ENCODE measurements at regions of chr1 and their contacts with region 1.

Region 1: GRCh38 chr1:92960395-92961130 is 699 bp downstream of the DIPK1A start:
- DNase-seq: peak; percentile 64
- H3K4me3 Mint-ChIP-seq: peak overlapping the region; percentile 91
- H3K27ac Mint-ChIP-seq: peak overlapping the region; percentile 96
- H3K4me1 Mint-ChIP-seq: peaks cover 37% of the 10 kb centered on the region
- H3K27me3 Mint-ChIP-seq: no peaks in the 10 kb centered on the region

Region 2: GRCh38 chr1:92858564-92859399 is 101.8 kb before region 1 on chr1:
- intact Hi-C with region 1: loop called (anchors 1 kb)
- DNase-seq: peak; percentile 45
- H3K4me3 Mint-ChIP-seq: peak overlapping the region; percentile 52
- H3K27ac Mint-ChIP-seq: peak overlapping the region; percentile 61
- H3K4me1 Mint-ChIP-seq: peaks cover 28% of the 10 kb centered on the region
- H3K27me3 Mint-ChIP-seq: no peaks in the 10 kb centered on the region

Region 3: GRCh38 chr1:92975551-92976232 is 15.1 kb after region 1 on chr1:
- intact Hi-C with region 1: loop called (anchors 1 kb)
- DNase-seq: no peak
- H3K4me3 Mint-ChIP-seq: no peak overlapping the region
- H3K27ac Mint-ChIP-seq: peak overlapping the region; percentile 89
- H3K4me1 Mint-ChIP-seq: peaks cover 58% of the 10 kb centered on the region
- H3K27me3 Mint-ChIP-seq: no peaks in the 10 kb centered on the region

Region 4: GRCh38 chr1:92994105-92994712 is 33.6 kb after region 1 on chr1:
- intact Hi-C with region 1: loop called (anchors 1 kb)
- DNase-seq: peak; percentile 57
- H3K4me3 Mint-ChIP-seq: no peak overlapping the region
- H3K27ac Mint-ChIP-seq: peak overlapping the region; percentile 14
- H3K4me1 Mint-ChIP-seq: peaks cover 46% of the 10 kb centered on the region
- H3K27me3 Mint-ChIP-seq: no peaks in the 10 kb centered on the region

Region 5: DNA sequence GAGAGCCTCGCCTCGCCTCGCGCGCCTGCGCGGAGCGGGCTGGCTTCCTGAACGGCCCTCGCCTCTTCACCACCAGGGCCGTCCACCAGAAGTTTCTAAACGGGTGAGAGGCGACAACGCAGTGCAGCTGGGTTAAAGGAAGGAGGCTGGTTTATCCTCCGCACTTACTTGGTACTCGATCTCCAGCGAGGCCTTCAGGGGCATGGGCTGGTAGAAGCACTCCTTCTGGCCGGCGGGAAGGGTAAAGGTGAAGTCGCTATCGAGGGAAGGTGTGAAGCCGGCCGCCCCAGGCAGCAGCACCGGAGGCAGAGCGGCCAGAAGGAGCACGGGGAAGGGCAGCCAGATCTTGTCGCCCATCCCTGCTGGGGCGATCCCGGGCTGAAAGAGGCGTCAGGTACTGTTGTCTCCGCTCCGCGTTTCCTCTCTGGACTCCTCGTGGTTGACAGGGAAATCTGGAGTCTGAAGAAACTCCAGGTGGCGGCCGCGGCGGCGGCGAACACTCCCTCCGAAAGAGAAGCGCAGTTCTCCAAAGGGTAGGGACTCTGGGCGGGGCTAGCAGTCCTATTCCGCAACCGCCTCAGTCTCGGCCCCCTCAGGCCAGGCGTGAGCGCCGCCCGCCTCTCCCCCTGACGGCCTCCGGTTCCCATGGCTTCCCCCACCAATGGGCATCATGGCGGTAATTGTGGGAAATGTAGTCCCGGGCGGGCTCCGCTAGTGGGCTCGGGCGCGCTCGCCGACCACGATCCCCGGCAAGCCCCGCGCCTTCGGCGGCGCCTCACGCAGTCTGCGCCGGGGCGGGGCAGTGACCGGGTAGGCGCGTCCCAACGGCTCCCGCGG is 219.5 kb after region 1 on chr1 and contains the start of gene TMED5:
- intact Hi-C with region 1: loop called (anchors 1 kb)
- DNase-seq: peak; percentile 97
- H3K4me3 Mint-ChIP-seq: peak within 1 kb of the TSS; percentile 97
- H3K27ac Mint-ChIP-seq: peak within 1 kb of the TSS; percentile 99
- H3K4me1 Mint-ChIP-seq: peaks cover 52% of the 10 kb centered on the region
- H3K27me3 Mint-ChIP-seq: no peaks in the 10 kb centered on the region
- total RNA-seq, gene TMED5: 58.6 and 60.4 TPM in 2 replicates